Caco-2 (cell line): ENCODE measurements at regions of chr15 and their contacts with region 1.

Region 1: GRCh38 chr15:85080329-85080728 is 98.7 kb downstream of the PDE8A start:
- DNase-seq: no peak
- H3K4me3 ChIP-seq: no peak overlapping the region
- H3K4me3 Mint-ChIP-seq: no peak overlapping the region
- H3K27ac Mint-ChIP-seq: no peak overlapping the region
- H3K4me1 ChIP-seq: no peaks in the 10 kb centered on the region
- H3K4me1 Mint-ChIP-seq: no peaks in the 10 kb centered on the region
- H3K27me3 ChIP-seq: no peaks in the 10 kb centered on the region
- H3K27me3 Mint-ChIP-seq: no peaks in the 10 kb centered on the region
- CTCF ChIP-seq: no peak

Region 2: GRCh38 chr15:85049805-85050204 is 30.5 kb before region 1 on chr15:
- CTCF ChIA-PET with region 1: no interaction called
- POLR2A ChIA-PET with region 1: no interaction called
- intact Hi-C with region 1: loop called (anchors 1 kb)
- DNase-seq: no peak
- H3K4me3 ChIP-seq: no peak overlapping the region
- H3K4me3 Mint-ChIP-seq: no peak overlapping the region
- H3K27ac Mint-ChIP-seq: no peak overlapping the region
- H3K4me1 ChIP-seq: peaks cover 16% of the 10 kb centered on the region
- H3K4me1 Mint-ChIP-seq: no peaks in the 10 kb centered on the region
- H3K27me3 ChIP-seq: no peaks in the 10 kb centered on the region
- H3K27me3 Mint-ChIP-seq: no peaks in the 10 kb centered on the region
- CTCF ChIP-seq: no peak